B cell (primary cell): ENCODE measurements at regions of chr2 and their contacts with region 1.

Region 1: DNA sequence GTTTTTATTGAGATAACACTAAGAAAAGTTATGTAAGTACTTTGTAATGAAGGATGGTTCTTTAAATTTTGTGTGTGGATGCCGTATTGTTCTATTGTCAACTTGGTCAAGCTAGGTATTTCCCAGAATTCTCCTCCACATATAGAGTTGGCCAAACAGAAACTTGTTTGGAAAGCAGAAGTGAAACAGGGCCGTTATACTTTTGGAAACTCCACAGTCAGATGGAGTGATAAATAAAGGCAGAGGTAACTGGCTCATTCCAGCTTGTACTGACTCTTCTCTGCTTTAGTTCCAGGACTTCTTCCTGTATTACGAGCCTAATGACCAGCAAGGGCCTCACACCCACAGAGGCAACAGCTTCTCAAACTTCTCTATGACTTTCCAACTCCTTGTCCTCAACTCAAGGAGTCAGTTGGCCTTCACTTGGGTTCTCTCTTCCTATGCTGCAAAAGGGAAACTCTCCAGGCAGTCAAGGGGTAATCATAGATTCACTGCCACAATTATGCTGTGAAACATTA is 16.4 kb upstream of the STARD7 start:
- DNase-seq: peak; percentile 70
- ATAC-seq: peak; percentile 85
- H3K4me3 ChIP-seq: no peak overlapping the region
- H3K4me3 Mint-ChIP-seq: peak overlapping the region; percentile 42
- H3K27ac ChIP-seq: peak overlapping the region; percentile 75 to 84
- H3K27ac Mint-ChIP-seq: peak overlapping the region; percentile 91
- H3K4me1 ChIP-seq: peaks cover 11 to 14% of the 10 kb centered on the region in 2 donors
- H3K4me1 Mint-ChIP-seq: peaks cover 16% of the 10 kb centered on the region
- H3K27me3 ChIP-seq: no peaks in the 10 kb centered on the region
- H3K27me3 Mint-ChIP-seq: no peaks in the 10 kb centered on the region
- CTCF ChIP-seq: no peak

Region 2: GRCh38 chr2:96241900-96242611 is 17.0 kb after region 1 on chr2:
- CTCF ChIA-PET with region 1: interaction called, 3 read pairs
- POLR2A ChIA-PET with region 1: no interaction called
- intact Hi-C with region 1: loop called (anchors 1 kb)
- DNase-seq: peak; percentile 67
- ATAC-seq: peak; percentile 86
- H3K4me3 ChIP-seq: peak overlapping the region; percentile 4 to 42 (median 38)
- H3K4me3 Mint-ChIP-seq: peak overlapping the region; percentile 76
- H3K27ac ChIP-seq: peak overlapping the region; percentile 77 to 93
- H3K27ac Mint-ChIP-seq: peak overlapping the region; percentile 95
- H3K4me1 ChIP-seq: peaks cover 34 to 51% of the 10 kb centered on the region in 2 donors
- H3K4me1 Mint-ChIP-seq: peaks cover 46% of the 10 kb centered on the region
- H3K27me3 ChIP-seq: no peaks in the 10 kb centered on the region
- H3K27me3 Mint-ChIP-seq: no peaks in the 10 kb centered on the region
- CTCF ChIP-seq: no peak

Region 3: DNA sequence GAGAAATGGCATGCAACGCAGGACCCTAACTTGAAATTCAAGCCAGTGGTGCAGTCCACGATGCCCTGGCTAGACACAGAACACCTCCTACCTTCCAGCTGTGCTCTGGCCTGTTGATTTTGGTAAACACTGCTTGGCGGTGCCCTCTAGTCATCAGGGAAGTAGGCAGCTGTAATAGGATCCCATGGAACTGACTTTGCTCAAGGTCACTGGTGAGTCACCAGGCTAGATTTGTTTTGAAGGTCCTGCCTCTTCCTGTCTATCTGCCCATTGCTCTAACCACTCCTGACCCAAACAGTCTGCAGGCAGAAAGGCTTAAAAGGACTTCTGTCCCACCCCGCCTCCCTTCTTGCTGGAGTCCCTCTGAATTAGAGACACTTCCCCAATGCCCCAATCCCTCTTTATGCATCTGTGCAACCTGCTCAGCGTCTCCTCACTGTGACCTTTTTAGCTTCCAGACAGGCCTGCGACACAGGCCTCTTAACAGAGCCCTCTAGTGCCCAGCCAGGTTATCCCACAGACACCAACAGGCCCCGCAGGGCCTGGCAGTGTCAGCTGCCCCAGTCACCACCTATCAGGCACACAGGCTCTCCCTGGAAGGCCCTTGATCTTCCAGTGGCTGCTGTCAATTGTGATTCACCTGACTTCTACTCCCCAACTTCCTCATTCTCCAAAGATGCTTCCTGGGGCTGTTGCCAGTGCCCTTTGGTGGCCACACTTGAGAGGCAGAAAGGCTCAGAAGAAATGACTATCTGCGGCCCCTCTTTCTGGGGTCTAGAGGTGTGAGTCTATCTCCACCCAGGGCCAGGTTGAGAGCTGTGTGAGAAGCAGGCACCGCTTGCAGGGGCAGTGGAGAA is 35.6 kb after region 1 on chr2:
- CTCF ChIA-PET with region 1: interaction called, 15 read pairs
- POLR2A ChIA-PET with region 1: no interaction called
- intact Hi-C with region 1: no loop called
- DNase-seq: peak; percentile 62
- ATAC-seq: peak; percentile 55
- H3K4me3 ChIP-seq: no peak overlapping the region
- H3K4me3 Mint-ChIP-seq: peak overlapping the region; percentile 64
- H3K27ac ChIP-seq: peak overlapping the region; percentile 44 to 64
- H3K27ac Mint-ChIP-seq: peak overlapping the region; percentile 92
- H3K4me1 ChIP-seq: peaks cover 65 to 75% of the 10 kb centered on the region in 2 donors
- H3K4me1 Mint-ChIP-seq: peaks cover 78% of the 10 kb centered on the region
- H3K27me3 ChIP-seq: no peaks in the 10 kb centered on the region
- H3K27me3 Mint-ChIP-seq: no peaks in the 10 kb centered on the region
- CTCF ChIP-seq: peak; percentile 29